ENCODE measurements at regions of chr11 and their contacts with region 1.

Region 1: GRCh38 chr11:44538375-44539054 is 26.9 kb upstream of the CD82 start:
- DNase-seq: peak; percentile 88
- H3K4me3 ChIP-seq: no peak overlapping the region
- H3K27ac ChIP-seq: no peak overlapping the region
- H3K4me1 ChIP-seq: no peaks in the 10 kb centered on the region
- H3K27me3 ChIP-seq: no peaks in the 10 kb centered on the region
- CTCF ChIP-seq: peak; percentile 91 to 96 (median 95)
- POLR2A ChIP-seq: no peak

Region 2: DNA sequence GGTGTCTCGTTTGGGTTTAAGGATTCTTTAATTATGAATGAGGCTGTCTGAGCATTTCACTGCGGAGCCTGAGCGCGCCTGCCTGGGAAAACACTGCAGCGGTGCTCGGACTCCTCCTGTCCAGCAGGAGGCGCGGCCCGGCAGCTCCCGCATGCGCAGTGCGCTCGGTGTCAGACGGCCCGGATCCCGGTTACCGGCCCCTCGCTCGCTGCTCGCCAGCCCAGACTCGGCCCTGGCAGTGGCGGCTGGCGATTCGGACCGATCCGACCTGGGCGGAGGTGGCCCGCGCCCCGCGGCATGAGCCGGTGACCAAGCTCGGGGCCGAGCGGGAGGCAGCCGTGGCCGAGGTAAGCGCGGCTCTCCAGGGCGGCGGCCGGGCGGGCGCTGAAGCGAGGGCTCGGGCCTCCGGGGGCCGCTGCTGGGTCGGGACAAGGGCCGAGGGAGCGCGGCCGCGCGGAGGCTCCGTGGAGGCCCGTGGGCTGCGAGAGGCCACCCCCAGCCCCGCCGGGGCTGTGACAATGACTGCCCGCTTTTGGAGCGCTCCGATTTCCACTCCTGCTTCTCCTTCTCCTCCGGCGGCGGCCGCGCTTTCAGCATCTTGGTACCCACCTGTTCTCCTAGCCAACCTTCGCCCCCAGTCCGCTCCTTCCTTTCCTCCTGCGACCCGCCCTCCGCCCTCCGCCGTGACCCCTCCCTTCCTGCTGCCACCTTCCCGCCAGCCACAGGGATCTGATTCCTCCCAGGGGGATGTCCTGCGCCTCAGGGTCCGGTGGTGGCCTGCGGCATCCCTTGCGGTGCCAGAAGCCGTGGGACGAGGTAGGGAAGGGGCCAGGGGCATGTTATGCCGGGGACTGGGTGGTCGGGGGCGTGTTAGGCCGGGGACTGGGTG is 442.8 kb before region 1 on chr11 and contains the start of gene EXT2:
- intact Hi-C with region 1: loop called (anchors 10 kb)
- DNase-seq: peak; percentile 91
- H3K4me3 ChIP-seq: peak within 1 kb of the TSS; percentile 83 to 90
- H3K27ac ChIP-seq: peak within 1 kb of the TSS; percentile 55 to 70
- H3K4me1 ChIP-seq: peaks cover 8% of the 10 kb centered on the region
- H3K27me3 ChIP-seq: no peaks in the 10 kb centered on the region
- CTCF ChIP-seq: peak; percentile 84 to 96 (median 92)
- POLR2A ChIP-seq: no peak
- total RNA-seq, gene EXT2: 60.9 to 71.2 TPM

Region 3: DNA sequence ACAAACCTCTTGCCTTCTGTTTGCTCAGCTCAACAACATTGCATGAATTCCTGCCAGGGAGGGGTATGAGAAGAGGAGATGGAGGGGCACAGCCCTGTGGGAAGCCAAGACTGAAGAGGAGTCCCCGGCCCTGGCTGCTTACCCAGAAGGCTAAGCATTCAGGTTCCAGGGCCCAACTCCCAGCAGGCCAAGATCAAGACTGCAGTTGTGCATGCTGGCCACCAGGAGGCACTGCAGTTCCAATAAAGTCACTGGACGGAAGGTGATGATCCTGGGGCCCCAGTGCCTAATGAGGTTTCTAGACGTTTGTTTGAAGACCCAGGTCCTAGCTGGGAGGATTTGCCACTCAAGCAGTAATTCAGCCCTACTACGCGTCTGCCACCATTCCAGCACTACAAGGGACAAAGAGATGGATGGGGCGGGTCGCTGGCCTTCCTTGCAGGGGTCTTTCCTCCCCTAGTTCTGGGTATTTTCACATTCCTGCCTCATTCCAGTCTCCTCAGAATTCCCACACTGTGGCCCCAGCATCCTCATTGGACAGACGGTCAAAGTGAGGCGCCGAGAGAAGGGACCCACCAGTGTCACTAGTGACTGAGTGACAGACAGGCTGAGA is 252.1 kb before region 1 on chr11:
- intact Hi-C with region 1: loop called (anchors 5 kb)
- DNase-seq: peak; percentile 73
- H3K4me3 ChIP-seq: no peak overlapping the region
- H3K27ac ChIP-seq: no peak overlapping the region
- H3K4me1 ChIP-seq: peaks cover 12% of the 10 kb centered on the region
- H3K27me3 ChIP-seq: no peaks in the 10 kb centered on the region
- CTCF ChIP-seq: peak; percentile 87 to 93 (median 92)
- POLR2A ChIP-seq: no peak

Region 4: DNA sequence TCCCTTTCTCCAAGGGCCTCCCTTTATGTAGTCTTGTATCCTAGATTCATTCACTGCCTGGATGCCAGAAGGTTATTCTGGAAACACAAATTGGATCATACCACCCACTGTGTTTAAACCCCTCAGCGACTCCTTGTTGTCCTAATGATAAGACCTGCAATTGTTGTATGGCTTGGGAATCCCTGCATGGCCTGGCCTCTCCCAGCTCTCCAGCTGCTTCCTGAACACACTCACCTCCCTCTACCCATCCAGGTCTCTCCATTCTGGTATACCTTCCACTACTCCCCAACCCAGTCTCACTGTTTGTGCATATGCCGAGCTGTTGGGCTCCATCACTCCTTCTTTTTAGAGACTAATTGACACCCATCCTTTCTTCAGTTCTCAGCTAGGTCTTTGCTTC is 104.3 kb before region 1 on chr11:
- intact Hi-C with region 1: no loop called
- DNase-seq: no peak
- H3K4me3 ChIP-seq: no peak overlapping the region
- H3K27ac ChIP-seq: no peak overlapping the region
- H3K4me1 ChIP-seq: no peaks in the 10 kb centered on the region
- H3K27me3 ChIP-seq: no peaks in the 10 kb centered on the region
- CTCF ChIP-seq: no peak
- POLR2A ChIP-seq: no peak

Region 5: GRCh38 chr11:44574610-44575287 is 36.2 kb after region 1 on chr11:
- intact Hi-C with region 1: no loop called
- DNase-seq: no peak
- H3K4me3 ChIP-seq: no peak overlapping the region
- H3K27ac ChIP-seq: no peak overlapping the region
- H3K4me1 ChIP-seq: no peaks in the 10 kb centered on the region
- H3K27me3 ChIP-seq: no peaks in the 10 kb centered on the region
- CTCF ChIP-seq: no peak
- POLR2A ChIP-seq: no peak

Region 6: DNA sequence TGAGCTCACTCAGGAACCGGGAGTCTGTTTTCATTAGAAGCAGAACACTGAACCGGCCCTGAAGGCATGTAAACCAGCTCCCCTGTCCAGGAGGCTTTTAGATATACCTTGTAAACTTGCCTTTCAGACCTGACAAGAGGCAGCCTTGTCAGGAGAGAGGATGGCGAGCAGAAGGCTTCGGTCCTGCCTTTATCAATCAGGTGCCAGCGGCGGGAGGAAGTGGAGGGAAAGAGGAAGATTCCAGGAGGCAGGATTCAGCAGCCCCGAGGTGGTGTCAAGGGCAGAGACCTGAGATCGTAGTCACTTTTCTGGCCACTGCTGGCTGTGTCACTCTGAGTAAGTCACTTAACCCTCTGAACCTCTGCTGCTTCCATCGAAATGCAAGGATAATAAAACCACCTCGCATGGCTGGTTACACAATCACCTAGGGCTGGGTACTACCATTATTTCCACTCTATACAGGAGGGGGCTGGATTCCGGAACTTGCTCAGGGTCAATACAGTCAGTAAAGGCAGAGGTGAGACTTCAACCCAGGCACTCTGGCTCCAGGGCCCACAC is 945.9 kb after region 1 on chr11:
- intact Hi-C with region 1: no loop called
- DNase-seq: no peak
- H3K4me3 ChIP-seq: no peak overlapping the region
- H3K27ac ChIP-seq: no peak overlapping the region
- H3K4me1 ChIP-seq: no peaks in the 10 kb centered on the region
- H3K27me3 ChIP-seq: no peaks in the 10 kb centered on the region
- CTCF ChIP-seq: no peak
- POLR2A ChIP-seq: no peak

Measured in testis (tissue), 5 donors.